A549 (cell line): ENCODE measurements at regions of chr2 and their contacts with region 1.

Region 1: GRCh38 chr2:172465417-172466334 is 38.3 kb downstream of the ITGA6 start:
- DNase-seq: peak; percentile 40 to 87
- ATAC-seq: peak; percentile 86 to 87
- H3K4me3 ChIP-seq: peak overlapping the region; percentile 20
- H3K27ac ChIP-seq: peak overlapping the region; percentile 24 to 69; a peak in 5 of 6 replicates
- H3K4me1 ChIP-seq: peaks cover 8% of the 10 kb centered on the region; the same call in 2 of the 3 replicates
- CTCF ChIP-seq: peak; percentile 93
- EP300 ChIP-seq: no peak
- POLR2A ChIP-seq: no peak
- RAD21 ChIP-seq: peak; percentile 93 to 95

Region 2: GRCh38 chr2:171902840-171903420 is 562.7 kb before region 1 on chr2:
- CTCF ChIA-PET with region 1: no interaction called
- POLR2A ChIA-PET with region 1: no interaction called
- DNase-seq: no peak
- ATAC-seq: no peak
- H3K4me3 ChIP-seq: no peak overlapping the region
- H3K27ac ChIP-seq: no peak overlapping the region
- H3K4me1 ChIP-seq: no peaks in the 10 kb centered on the region
- CTCF ChIP-seq: no peak
- EP300 ChIP-seq: no peak
- POLR2A ChIP-seq: no peak
- RAD21 ChIP-seq: no peak

Region 3: DNA sequence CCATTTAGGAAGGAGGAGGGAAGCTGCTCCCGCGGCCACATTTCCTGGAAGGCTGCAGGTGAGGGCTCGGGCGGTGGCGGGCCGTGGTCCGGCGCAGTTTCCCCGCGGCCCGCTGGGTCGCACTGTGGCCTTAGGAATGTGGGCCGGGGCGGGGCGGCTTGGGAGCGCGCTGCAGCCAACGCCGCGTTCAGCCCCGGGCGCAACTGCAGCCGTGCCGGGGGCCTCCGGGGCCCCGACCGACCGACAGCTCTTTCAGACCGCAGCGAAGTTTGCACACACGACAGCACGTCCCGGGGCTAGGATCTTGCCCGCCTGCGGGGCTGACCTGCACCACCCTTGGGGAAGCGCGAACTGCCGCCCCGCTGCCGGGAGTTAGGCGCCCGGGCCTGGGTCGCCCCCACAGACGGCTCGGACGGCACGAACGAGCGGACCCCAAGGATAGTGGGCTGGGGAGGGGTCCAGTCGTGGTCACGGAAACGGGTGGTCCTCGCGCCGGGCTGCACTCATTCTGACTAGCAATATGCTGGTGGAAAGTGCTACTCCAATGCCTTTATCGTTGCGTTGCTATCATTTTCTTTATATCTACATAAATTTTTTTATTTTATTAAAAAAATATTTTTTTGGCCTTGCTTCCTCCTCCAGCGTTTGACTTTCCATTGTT is 293.0 kb before region 1 on chr2:
- CTCF ChIA-PET with region 1: interaction called, 403 read pairs
- POLR2A ChIA-PET with region 1: no interaction called
- DNase-seq: peak; percentile 58 to 68
- ATAC-seq: peak; percentile 100
- H3K4me3 ChIP-seq: peak overlapping the region; percentile 61
- H3K27ac ChIP-seq: peak overlapping the region; percentile 62 to 75; a peak in 5 of 6 replicates
- H3K4me1 ChIP-seq: peaks cover 5% of the 10 kb centered on the region; the same call in 1 of the 3 replicates
- CTCF ChIP-seq: peak; percentile 94
- EP300 ChIP-seq: no peak
- POLR2A ChIP-seq: no peak
- RAD21 ChIP-seq: peak; percentile 92 to 99

Region 4: GRCh38 chr2:172253190-172254052 is 212.3 kb before region 1 on chr2:
- CTCF ChIA-PET with region 1: interaction called, 15 read pairs
- POLR2A ChIA-PET with region 1: no interaction called
- DNase-seq: peak; percentile 75 to 95
- ATAC-seq: peak; percentile 93 to 94
- H3K4me3 ChIP-seq: no peak overlapping the region
- H3K27ac ChIP-seq: peak overlapping the region; percentile 21 to 77; a peak in 4 of 6 replicates
- H3K4me1 ChIP-seq: peaks cover 25% of the 10 kb centered on the region
- CTCF ChIP-seq: no peak
- EP300 ChIP-seq: peak in 1 of 2 experiments; percentile 34; a peak in 1 of 5 replicates
- POLR2A ChIP-seq: no peak
- RAD21 ChIP-seq: no peak

Region 5: GRCh38 chr2:172395503-172395902 is 70.2 kb before region 1 on chr2:
- CTCF ChIA-PET with region 1: interaction called, 11 read pairs
- POLR2A ChIA-PET with region 1: no interaction called
- DNase-seq: no peak
- ATAC-seq: no peak
- H3K4me3 ChIP-seq: no peak overlapping the region
- H3K27ac ChIP-seq: no peak overlapping the region
- H3K4me1 ChIP-seq: no peaks in the 10 kb centered on the region
- CTCF ChIP-seq: no peak
- EP300 ChIP-seq: no peak
- POLR2A ChIP-seq: no peak
- RAD21 ChIP-seq: no peak

Region 6: GRCh38 chr2:172484253-172484652 is 18.6 kb after region 1 on chr2:
- CTCF ChIA-PET with region 1: interaction called, 18 read pairs
- POLR2A ChIA-PET with region 1: no interaction called
- DNase-seq: peak in 1 of 2 experiments; percentile 24
- ATAC-seq: peak; percentile 37 to 54; a peak in 2 of 6 replicates
- H3K4me3 ChIP-seq: no peak overlapping the region
- H3K27ac ChIP-seq: no peak overlapping the region
- H3K4me1 ChIP-seq: no peaks in the 10 kb centered on the region
- CTCF ChIP-seq: peak; percentile 55
- EP300 ChIP-seq: no peak
- POLR2A ChIP-seq: no peak
- RAD21 ChIP-seq: peak; percentile 60 to 61

Region 7: GRCh38 chr2:172507199-172507598 is 41.5 kb after region 1 on chr2:
- CTCF ChIA-PET with region 1: no interaction called
- POLR2A ChIA-PET with region 1: no interaction called
- DNase-seq: no peak
- ATAC-seq: no peak
- H3K4me3 ChIP-seq: no peak overlapping the region
- H3K27ac ChIP-seq: no peak overlapping the region
- H3K4me1 ChIP-seq: no peaks in the 10 kb centered on the region
- CTCF ChIP-seq: no peak
- EP300 ChIP-seq: no peak
- POLR2A ChIP-seq: no peak
- RAD21 ChIP-seq: no peak

Region 8: DNA sequence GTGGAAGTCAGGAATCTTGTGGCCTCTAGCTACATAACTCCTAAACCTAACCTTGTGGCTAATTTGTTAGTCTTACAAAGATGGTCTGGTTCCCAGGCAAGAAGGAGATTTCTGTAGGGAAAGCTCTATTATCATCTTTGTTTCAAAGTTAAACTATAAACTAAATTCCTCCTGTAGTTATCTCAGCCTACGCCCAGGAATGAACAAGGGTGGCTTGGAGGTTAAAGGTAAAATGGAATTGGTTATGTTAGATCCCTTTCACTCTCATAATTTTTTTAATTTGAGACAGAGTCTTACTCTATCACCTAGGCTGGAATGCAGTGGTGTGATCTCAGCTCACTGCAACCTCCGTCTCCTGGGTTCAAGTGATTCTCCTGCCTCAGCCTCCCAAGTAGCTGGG is 65.6 kb after region 1 on chr2:
- CTCF ChIA-PET with region 1: no interaction called
- POLR2A ChIA-PET with region 1: no interaction called
- DNase-seq: no peak
- ATAC-seq: no peak
- H3K4me3 ChIP-seq: no peak overlapping the region
- H3K27ac ChIP-seq: no peak overlapping the region
- H3K4me1 ChIP-seq: no peaks in the 10 kb centered on the region
- CTCF ChIP-seq: no peak
- EP300 ChIP-seq: no peak
- POLR2A ChIP-seq: no peak
- RAD21 ChIP-seq: no peak